Caco-2 (cell line): ENCODE measurements at regions of chr6 and their contacts with region 1.

Region 1: DNA sequence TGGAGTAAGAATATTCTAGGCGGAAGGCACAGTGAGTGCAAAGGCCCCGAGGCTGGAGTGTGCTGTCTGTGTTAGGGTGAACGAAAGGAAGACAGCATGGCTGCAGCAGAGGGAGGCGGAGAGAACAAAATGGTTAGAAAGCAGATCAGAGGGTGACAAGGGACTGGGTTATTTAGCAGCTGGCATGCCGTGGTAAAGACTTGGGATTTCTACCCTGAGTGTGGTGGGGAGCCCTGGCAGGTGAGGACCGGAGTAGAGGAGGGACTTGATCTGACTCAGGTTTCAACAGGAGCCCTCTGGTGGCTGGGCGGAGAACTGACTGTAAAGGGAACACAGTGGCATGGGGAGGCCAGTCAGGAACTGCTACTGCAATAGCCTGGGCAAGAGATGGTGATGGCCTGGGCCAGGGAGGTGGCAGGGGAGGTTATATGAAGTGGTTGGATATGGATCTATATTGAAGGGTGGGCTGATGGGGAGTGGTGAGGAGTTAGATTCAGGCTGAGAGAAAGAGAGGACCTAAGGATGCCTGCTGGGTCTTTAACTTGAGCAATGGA is 38.0 kb downstream of the PIM1 start:
- DNase-seq: peak; percentile 89 to 92
- H3K4me3 ChIP-seq: no peak overlapping the region
- H3K4me3 Mint-ChIP-seq: no peak overlapping the region
- H3K27ac Mint-ChIP-seq: no peak overlapping the region
- H3K4me1 ChIP-seq: peaks cover 25% of the 10 kb centered on the region
- H3K4me1 Mint-ChIP-seq: peaks cover 26% of the 10 kb centered on the region
- H3K27me3 ChIP-seq: no peaks in the 10 kb centered on the region
- H3K27me3 Mint-ChIP-seq: no peaks in the 10 kb centered on the region
- CTCF ChIP-seq: peak; percentile 87 to 89

Region 2: GRCh38 chr6:36765594-36766398 is 442.2 kb before region 1 on chr6:
- CTCF ChIA-PET with region 1: interaction called, 3 read pairs
- POLR2A ChIA-PET with region 1: no interaction called
- intact Hi-C with region 1: loop called (anchors 1 kb)
- DNase-seq: peak; percentile 77 to 85
- H3K4me3 ChIP-seq: no peak overlapping the region
- H3K4me3 Mint-ChIP-seq: no peak overlapping the region
- H3K27ac Mint-ChIP-seq: no peak overlapping the region
- H3K4me1 ChIP-seq: no peaks in the 10 kb centered on the region
- H3K4me1 Mint-ChIP-seq: no peaks in the 10 kb centered on the region
- H3K27me3 ChIP-seq: no peaks in the 10 kb centered on the region
- H3K27me3 Mint-ChIP-seq: no peaks in the 10 kb centered on the region
- CTCF ChIP-seq: peak; percentile 86 to 93

Region 3: DNA sequence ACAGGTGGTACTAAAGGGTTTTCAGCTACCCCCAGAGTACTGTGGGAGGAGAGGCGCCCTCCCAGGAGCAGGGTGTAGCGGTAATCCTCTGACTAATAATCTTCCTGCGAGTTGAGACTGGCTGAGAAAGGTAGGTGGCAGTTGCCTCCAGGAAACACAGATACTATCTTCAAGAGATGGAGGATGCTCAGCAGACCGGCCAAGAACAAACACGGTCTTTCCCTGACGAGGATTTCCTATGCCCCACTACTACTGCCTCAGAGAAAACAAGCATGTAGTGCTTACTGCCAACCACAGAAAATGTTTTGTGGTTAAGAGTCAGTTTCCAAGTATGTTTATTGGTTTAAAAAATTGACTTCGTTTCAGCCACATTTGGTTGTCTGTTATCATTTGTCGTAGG is 295.4 kb before region 1 on chr6:
- CTCF ChIA-PET with region 1: interaction called, 3 read pairs
- POLR2A ChIA-PET with region 1: interaction called, 4 read pairs
- intact Hi-C with region 1: loop called (anchors 10 kb)
- DNase-seq: no peak
- H3K4me3 ChIP-seq: no peak overlapping the region
- H3K4me3 Mint-ChIP-seq: no peak overlapping the region
- H3K27ac Mint-ChIP-seq: no peak overlapping the region
- H3K4me1 ChIP-seq: peaks cover 16% of the 10 kb centered on the region
- H3K4me1 Mint-ChIP-seq: peaks cover 7% of the 10 kb centered on the region
- H3K27me3 ChIP-seq: no peaks in the 10 kb centered on the region
- H3K27me3 Mint-ChIP-seq: no peaks in the 10 kb centered on the region
- CTCF ChIP-seq: no peak

Region 4: DNA sequence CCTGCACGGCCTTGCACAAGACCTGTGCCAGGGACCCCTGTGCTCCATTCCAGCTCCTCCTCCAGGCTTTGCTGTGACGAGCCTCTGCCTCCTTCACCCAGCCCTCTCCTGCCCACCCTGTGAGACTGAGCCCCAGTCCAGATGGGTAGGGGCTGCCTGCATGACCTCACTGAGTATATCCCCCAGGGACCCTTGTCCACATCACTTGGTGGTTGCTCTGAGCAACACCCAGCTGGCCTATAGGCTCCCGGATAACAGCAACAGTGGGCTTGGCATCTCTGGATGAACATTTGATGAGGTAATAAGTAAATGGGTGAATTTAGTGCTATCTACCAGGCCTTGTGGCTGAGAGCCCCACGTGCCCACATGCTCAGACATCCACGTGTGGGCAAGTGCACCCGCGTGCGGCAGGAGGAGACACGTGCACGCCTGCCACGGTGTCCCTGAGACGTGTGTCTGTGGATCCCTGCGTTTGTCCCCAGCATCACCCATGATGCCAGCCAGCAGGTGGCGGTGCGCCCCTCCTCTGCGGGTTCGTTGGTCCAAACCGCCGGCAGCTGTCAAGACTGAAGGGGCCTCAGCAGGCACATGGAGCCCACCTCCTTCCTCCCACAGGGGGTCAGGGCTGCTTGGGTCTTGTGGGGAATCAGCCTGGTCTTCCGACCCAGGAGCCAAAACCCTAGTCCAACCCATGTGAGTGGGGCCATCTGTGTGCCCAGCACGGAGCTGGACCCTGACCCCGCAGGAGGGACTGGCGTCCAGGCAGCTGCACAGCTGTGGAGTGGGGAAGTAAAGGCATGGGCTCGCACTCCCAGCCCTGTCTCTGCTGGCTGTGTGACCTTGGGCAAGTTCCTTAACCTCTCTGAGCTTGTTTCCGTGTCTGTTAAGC is 156.6 kb before region 1 on chr6:
- CTCF ChIA-PET with region 1: interaction called, 24 read pairs
- POLR2A ChIA-PET with region 1: no interaction called
- intact Hi-C with region 1: loop called (anchors 1 kb)
- DNase-seq: peak; percentile 81 to 91
- H3K4me3 ChIP-seq: no peak overlapping the region
- H3K4me3 Mint-ChIP-seq: no peak overlapping the region
- H3K27ac Mint-ChIP-seq: no peak overlapping the region
- H3K4me1 ChIP-seq: peaks cover 14% of the 10 kb centered on the region
- H3K4me1 Mint-ChIP-seq: peaks cover 7% of the 10 kb centered on the region
- H3K27me3 ChIP-seq: no peaks in the 10 kb centered on the region
- H3K27me3 Mint-ChIP-seq: no peaks in the 10 kb centered on the region
- CTCF ChIP-seq: peak; percentile 86 to 93

Region 5: DNA sequence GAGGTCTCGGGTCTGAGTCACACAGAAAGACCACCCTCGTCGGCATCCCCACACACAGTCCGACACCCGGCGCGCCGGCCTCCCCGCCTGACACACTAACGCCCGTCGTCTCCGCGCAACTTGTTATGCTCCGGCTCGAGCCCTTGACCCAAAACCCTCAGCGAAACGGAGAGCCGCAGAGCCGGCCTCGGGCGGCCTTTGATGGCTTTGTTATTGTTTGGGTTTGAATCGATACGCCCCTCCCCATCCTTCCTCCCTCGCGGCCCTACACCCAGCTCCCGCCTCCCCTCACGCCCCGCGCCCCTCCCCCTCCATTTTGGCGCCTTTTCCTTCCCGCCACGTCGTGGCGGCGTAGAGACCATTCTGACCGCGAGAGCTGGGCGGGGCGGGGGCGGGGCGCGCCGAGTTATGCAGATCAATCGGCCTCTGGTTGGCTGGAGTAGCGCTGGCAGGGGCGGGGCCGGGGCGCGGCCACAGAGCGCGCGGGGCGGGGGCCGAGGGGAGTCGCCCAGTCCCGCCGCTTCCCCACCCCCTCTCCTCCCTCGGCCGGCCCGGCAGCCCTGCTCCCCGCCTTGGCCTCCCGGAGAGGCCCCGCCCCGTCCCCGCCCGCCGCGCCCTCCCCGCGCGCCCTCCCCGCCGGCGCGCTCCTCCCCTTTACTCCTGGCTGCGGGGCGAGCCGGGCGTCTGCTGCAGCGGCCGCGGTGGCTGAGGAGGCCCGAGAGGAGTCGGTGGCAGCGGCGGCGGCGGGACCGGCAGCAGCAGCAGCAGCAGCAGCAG is 38.3 kb before region 1 on chr6 and contains the start of gene PIM1:
- CTCF ChIA-PET with region 1: interaction called, 9 read pairs
- POLR2A ChIA-PET with region 1: no interaction called
- intact Hi-C with region 1: loop called (anchors 1 kb)
- DNase-seq: peak; percentile 97 to 99
- H3K4me3 ChIP-seq: peak within 1 kb of the TSS; percentile 82
- H3K4me3 Mint-ChIP-seq: peak within 1 kb of the TSS; percentile 88
- H3K27ac Mint-ChIP-seq: peak within 1 kb of the TSS; percentile 98
- H3K4me1 ChIP-seq: peaks cover 10% of the 10 kb centered on the region; the same call in 1 of the 2 replicates
- H3K4me1 Mint-ChIP-seq: peaks cover 14% of the 10 kb centered on the region
- H3K27me3 ChIP-seq: no peaks in the 10 kb centered on the region
- H3K27me3 Mint-ChIP-seq: no peaks in the 10 kb centered on the region
- CTCF ChIP-seq: no peak
- total RNA-seq, gene PIM1: 43.8 and 48.3 TPM in 2 replicates

Region 6: DNA sequence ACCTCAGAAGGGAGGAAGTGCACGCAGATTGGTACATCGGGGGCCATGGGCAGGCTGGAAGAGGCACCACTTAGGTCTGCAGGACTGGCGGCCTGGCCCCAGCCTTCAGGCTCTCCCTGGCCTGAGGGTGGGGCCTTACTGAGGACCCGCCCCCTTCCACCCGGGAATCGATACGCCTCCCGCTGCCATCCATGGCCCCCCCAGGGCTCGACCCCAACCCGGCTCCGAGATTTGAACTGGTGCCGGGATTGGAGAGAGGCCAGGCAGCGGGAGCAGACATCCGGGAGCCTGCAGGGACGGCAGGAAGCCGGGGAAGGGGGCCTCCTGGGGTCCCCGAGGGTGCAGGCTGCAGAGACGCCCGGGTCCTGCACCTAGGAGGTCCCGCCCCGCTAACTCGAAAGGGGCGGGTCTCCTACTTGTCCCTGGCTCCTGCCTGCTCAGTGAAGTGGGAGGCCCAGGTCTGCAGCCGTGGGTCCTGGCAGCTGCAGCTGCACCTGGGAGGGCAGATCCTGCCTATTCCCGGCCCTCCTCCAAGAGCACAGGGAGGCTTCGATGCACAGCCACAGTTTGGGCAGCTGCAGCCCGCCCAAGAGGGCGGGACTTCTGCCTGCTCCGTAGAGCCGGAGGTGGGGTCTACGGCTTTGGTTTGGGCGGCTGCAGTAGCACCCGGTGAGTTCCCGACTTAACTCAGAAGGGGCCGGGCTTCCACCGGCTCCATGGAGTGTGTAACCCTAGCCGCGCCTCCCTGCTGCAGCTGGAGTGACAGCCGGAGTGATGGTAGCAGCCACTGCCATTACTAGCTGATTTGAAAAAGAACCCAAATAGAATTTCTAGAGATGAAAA is 14.4 kb after region 1 on chr6:
- CTCF ChIA-PET with region 1: interaction called, 14 read pairs
- POLR2A ChIA-PET with region 1: no interaction called
- intact Hi-C with region 1: no loop called
- DNase-seq: peak; percentile 93 to 96
- H3K4me3 ChIP-seq: peak overlapping the region; percentile 54
- H3K4me3 Mint-ChIP-seq: peak overlapping the region; percentile 78
- H3K27ac Mint-ChIP-seq: peak overlapping the region; percentile 66
- H3K4me1 ChIP-seq: peaks cover 6% of the 10 kb centered on the region; the same call in 1 of the 2 replicates
- H3K4me1 Mint-ChIP-seq: peaks cover 7% of the 10 kb centered on the region
- H3K27me3 ChIP-seq: no peaks in the 10 kb centered on the region
- H3K27me3 Mint-ChIP-seq: no peaks in the 10 kb centered on the region
- CTCF ChIP-seq: no peak